ENCODE measurements at regions of chr5 and their contacts with region 1.

Region 1: DNA sequence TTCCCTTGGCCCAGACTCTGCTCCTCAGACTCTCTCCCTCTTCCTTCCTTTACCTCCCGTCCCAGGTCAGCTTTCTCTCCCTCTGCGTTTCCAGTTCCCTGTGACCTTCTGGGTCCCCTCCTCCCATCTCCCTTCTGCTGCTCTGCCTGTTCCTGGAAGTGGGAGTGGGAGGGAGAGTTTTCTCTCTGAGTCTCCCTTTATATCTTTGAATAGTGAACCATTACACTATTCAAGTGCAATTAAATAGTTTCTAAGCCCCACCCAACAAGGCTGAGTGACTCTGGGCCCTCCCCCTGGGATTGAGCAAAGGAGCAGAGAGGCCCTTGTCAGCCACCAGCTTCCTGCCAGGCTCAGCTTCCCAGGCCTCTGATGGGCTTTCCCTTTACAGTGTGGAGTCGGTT is 34.8 kb downstream of the THBS4 start:
- DNase-seq: peak; percentile 84 to 85
- H3K4me3 ChIP-seq: no peak overlapping the region
- H3K4me1 ChIP-seq: peaks cover 13% of the 10 kb centered on the region
- H3K27me3 ChIP-seq: no peaks in the 10 kb centered on the region

Region 2: DNA sequence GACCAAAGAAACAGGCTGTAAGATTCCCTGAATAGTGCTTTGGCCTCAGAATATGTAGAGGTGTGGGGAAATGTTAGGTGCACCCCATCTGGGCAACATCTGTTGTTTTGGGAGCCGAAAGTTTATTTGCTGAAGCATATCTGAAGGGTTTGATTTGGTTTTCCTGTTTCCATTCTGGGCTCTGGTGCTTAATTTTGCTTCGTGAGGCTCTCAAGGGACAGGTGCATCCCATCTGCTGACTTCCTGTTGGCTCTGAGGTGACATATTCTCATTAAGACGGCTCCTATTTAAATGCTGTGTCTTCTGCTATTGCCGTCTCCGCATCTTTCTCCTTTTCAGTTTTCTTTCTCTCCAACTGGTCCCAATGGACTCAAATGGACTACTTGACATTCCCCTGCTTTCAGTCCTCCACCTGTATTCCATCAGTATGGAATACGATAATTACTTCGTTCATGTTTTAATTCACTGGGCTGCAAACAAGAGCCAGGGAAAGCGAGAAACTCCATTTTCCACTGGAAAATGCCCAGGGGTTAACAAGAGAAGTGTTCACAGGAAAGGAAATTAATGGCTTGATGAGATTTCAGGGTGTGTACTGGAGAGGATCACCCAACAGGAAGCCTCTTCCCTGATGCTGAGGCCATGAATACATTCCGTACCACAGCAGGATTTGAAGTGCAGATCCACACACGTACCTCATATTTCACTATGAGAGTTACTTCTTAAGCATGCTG is 182.8 kb before region 1 on chr5:
- in situ Hi-C with region 1: loop called (anchors 10 kb)
- DNase-seq: no peak
- H3K4me3 ChIP-seq: no peak overlapping the region
- H3K4me1 ChIP-seq: no peaks in the 10 kb centered on the region
- H3K27me3 ChIP-seq: no peaks in the 10 kb centered on the region

Region 3: GRCh38 chr5:80034962-80035821 is 34.7 kb before region 1 on chr5 and contains the start of gene THBS4:
- in situ Hi-C with region 1: loop called (anchors 5 kb)
- DNase-seq: no peak
- H3K4me3 ChIP-seq: no peak within 1 kb of the TSS
- H3K4me1 ChIP-seq: no peaks in the 10 kb centered on the region
- H3K27me3 ChIP-seq: peaks cover 23% of the 10 kb centered on the region

Measured in HAP-1 (cell line).